Endothelial cell of umbilical vein (primary cell): ENCODE measurements at regions of chr7 and their contacts with region 1.

Region 1: GRCh38 chr7:7424151-7424873 is 111.4 kb downstream of the COL28A1 start:
- DNase-seq: peak; percentile 67
- H3K4me3 ChIP-seq: peak overlapping the region; percentile 37 to 93 (median 81)
- H3K27ac ChIP-seq: peak overlapping the region; percentile 3
- H3K4me1 ChIP-seq: peaks cover 2% of the 10 kb centered on the region
- H3K27me3 ChIP-seq: peaks cover 0 to 2% of the 10 kb centered on the region in 2 experiments
- CTCF ChIP-seq: peak; percentile 73 to 82
- POLR2A ChIP-seq: no peak

Region 2: GRCh38 chr7:7242899-7243298 is 181.4 kb before region 1 on chr7:
- CTCF ChIA-PET with region 1: no interaction called
- POLR2A ChIA-PET with region 1: no interaction called
- dilution Hi-C with region 1: no loop called
- intact Hi-C with region 1: no loop called
- DNase-seq: no peak
- H3K4me3 ChIP-seq: no peak overlapping the region
- H3K27ac ChIP-seq: no peak overlapping the region
- H3K4me1 ChIP-seq: no peaks in the 10 kb centered on the region
- H3K27me3 ChIP-seq: no peaks in the 10 kb centered on the region
- CTCF ChIP-seq: no peak
- POLR2A ChIP-seq: no peak

Region 3: DNA sequence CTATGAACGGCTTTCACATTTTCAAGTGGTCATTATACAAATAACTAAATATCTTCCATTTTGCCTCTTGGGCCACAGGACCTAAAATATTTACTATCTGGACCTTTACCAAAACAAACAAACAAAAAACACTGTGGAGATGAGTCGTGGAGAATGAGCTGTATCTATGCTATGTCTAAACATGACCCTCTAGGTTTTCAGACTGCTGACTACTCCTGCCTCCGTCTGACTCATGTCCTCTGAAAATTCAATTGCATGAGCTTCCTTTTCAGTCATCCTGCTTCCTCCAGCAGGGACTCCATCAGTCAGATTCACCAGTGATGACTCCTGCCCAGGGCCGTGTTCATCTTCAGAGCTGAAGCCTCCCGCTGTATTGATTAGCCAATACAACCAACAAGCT is 14.5 kb after region 1 on chr7:
- CTCF ChIA-PET with region 1: interaction called, 23 read pairs
- POLR2A ChIA-PET with region 1: no interaction called
- dilution Hi-C with region 1: no loop called
- intact Hi-C with region 1: no loop called
- DNase-seq: peak; percentile 78
- H3K4me3 ChIP-seq: no peak overlapping the region
- H3K27ac ChIP-seq: peak overlapping the region; percentile 35
- H3K4me1 ChIP-seq: peaks cover 20% of the 10 kb centered on the region
- H3K27me3 ChIP-seq: no peaks in the 10 kb centered on the region
- CTCF ChIP-seq: no peak
- POLR2A ChIP-seq: no peak

Region 4: DNA sequence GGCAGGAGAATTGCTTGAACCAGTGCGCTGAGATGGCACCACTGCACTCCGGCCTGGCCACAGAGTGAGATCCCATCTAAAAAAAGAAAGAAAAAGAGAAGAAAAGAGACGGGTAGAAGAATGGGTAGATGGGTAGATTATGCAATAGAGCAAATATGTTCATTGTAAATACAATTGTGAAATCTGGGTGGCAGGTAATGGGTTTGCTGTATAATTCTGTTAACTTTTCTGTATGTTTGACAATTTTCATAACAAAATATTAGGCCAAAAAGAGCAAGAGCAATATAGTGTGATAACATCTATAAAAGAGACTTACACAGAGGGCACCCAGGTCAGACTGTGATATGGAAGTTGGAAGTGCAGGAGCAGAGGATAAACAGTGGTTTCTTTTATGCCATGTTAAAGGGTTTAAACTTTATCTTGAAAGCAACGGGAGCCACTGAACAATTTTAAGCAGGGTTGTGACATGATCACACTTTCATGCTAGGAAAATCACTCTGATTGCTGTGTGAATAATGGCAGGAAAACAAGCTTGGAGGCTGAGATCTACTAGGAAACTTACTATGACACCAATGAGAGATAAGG is 118.0 kb after region 1 on chr7:
- CTCF ChIA-PET with region 1: interaction called, 32 read pairs
- POLR2A ChIA-PET with region 1: no interaction called
- dilution Hi-C with region 1: no loop called
- intact Hi-C with region 1: loop called (anchors 1 kb)
- DNase-seq: no peak
- H3K4me3 ChIP-seq: no peak overlapping the region
- H3K27ac ChIP-seq: no peak overlapping the region
- H3K4me1 ChIP-seq: no peaks in the 10 kb centered on the region
- H3K27me3 ChIP-seq: no peaks in the 10 kb centered on the region
- CTCF ChIP-seq: no peak
- POLR2A ChIP-seq: no peak

Region 5: DNA sequence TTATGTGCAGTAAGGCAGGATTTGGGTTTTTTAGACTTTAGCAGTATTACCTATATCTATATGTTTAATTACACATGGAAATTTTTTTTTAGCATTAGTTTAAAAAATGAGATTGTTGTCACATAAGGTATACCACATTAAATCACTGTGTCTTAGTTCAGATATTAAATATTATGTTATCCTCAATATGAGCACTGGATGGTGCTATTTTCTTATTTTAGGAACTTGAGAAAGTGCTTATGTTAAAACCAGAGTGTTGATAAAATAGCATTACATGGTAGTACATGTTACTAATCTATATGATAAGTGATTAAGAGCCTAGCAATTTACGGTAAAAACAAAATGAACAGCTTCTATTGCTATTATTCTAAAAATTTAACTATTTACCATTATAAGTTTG is 171.1 kb after region 1 on chr7:
- CTCF ChIA-PET with region 1: interaction called, 13 read pairs
- POLR2A ChIA-PET with region 1: no interaction called
- dilution Hi-C with region 1: no loop called
- intact Hi-C with region 1: no loop called
- DNase-seq: peak; percentile 41
- H3K4me3 ChIP-seq: no peak overlapping the region
- H3K27ac ChIP-seq: no peak overlapping the region
- H3K4me1 ChIP-seq: no peaks in the 10 kb centered on the region
- H3K27me3 ChIP-seq: no peaks in the 10 kb centered on the region
- CTCF ChIP-seq: no peak
- POLR2A ChIP-seq: no peak

Region 6: DNA sequence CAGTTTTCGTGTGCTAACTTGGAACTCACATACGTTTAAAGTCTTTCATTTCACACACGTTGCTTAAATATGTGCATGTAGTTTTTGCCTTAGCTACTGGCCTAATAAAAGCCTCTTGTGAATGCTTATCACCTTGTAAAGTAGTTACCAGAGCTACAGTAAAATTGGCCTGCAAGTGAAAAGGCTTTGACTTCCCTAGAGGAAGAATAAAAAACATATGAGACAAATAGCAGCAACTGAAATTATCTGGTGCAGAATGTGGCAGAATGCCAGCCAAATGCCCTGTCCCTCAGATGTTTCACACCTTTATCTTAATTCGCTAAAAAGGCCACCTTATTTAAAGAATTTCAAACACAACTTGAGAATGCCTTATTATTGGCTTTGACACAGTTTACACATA is 322.1 kb after region 1 on chr7:
- CTCF ChIA-PET with region 1: no interaction called
- POLR2A ChIA-PET with region 1: no interaction called
- dilution Hi-C with region 1: no loop called
- intact Hi-C with region 1: no loop called
- DNase-seq: no peak
- H3K4me3 ChIP-seq: no peak overlapping the region
- H3K27ac ChIP-seq: no peak overlapping the region
- H3K4me1 ChIP-seq: no peaks in the 10 kb centered on the region
- H3K27me3 ChIP-seq: no peaks in the 10 kb centered on the region
- CTCF ChIP-seq: no peak
- POLR2A ChIP-seq: no peak

Region 7: DNA sequence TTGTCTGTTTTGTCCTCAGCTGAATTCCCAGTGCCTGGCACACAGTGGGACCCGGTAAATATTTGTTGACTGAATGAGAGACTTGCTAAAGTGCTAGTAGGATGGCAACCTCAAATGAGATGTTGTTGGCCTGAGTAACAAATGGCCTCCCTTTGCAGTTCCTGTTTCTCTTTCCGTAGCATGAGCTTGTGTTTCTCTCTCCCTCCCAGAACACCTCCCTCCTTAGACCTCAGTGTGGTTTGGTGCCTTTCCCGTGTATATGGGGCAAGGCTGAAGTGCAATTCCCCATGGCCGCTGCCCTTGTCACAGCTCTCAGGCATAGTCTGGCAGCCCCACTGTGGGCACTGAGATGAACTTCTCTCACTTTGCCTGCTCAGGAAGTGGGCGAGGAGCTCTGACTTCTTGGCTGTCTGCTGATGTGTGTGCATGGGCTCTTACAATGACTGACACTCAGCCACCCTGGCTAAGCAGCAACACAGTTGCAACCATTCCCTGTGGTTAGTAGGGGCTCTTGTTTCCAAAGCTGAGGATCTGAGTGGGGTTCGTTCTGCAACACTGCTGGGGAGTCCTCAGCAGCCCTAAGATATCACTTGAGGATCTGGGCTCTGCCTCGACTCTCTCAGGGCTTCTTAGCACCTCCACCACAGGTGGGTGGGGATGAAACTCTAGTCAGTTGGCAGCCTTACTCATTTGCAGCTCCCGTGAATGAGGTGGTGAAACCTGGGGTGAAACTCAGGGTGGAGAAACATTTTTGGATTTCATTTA is 701.5 kb after region 1 on chr7:
- CTCF ChIA-PET with region 1: no interaction called
- POLR2A ChIA-PET with region 1: no interaction called
- dilution Hi-C with region 1: no loop called
- intact Hi-C with region 1: no loop called
- DNase-seq: no peak
- H3K4me3 ChIP-seq: no peak overlapping the region
- H3K27ac ChIP-seq: no peak overlapping the region
- H3K4me1 ChIP-seq: no peaks in the 10 kb centered on the region
- H3K27me3 ChIP-seq: no peaks in the 10 kb centered on the region
- CTCF ChIP-seq: no peak
- POLR2A ChIP-seq: no peak

Region 8: DNA sequence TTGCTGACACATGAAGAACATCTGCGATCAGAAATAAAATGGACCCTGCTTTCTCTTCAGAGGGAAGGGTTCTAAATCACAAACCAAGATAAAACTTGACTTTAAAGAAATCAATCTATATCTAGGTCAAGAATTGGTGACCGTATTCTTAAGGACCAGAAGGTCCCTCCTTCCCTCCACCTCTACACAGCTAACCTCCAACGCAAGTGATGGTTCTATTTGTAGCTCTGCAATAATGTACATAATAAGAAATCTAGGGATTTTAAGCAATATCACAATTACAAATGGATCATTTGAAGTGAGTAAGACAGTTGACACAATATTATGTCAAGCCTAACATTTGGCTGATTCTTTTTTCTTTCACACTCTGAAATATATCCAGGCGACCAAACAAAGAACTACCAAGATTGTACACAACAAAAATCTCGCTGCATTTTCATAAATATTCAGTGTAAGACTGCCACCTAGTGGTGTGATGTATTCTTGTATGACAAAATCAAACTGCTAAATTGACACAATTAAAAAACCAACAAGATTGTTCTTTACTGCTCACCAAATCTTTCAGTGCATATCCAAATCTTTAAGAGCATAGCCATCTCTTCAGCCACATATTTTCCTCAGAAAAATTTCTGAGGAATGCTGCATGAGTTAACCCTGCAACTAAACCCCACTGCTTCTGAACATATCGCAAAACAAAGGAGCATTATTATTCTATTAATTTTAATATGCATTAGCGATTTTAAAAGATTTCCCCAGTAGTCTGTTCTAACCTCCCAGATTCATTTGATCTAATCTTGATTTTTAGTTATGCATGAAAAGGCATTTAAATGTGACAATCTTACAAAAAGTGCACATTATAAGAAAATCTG is 793.1 kb after region 1 on chr7:
- CTCF ChIA-PET with region 1: interaction called, 11 read pairs
- POLR2A ChIA-PET with region 1: no interaction called
- dilution Hi-C with region 1: no loop called
- intact Hi-C with region 1: loop called (anchors 1 kb)
- DNase-seq: peak; percentile 67
- H3K4me3 ChIP-seq: no peak overlapping the region
- H3K27ac ChIP-seq: no peak overlapping the region
- H3K4me1 ChIP-seq: no peaks in the 10 kb centered on the region
- H3K27me3 ChIP-seq: no peaks in the 10 kb centered on the region
- CTCF ChIP-seq: peak; percentile 32 to 40
- POLR2A ChIP-seq: no peak